Tibial artery (tissue), 4 donors: ENCODE measurements at regions of chr12 and their contacts with region 1.

Region 1: GRCh38 chr12:95918194-95918993 is 24.0 kb downstream of the CCDC38 start:
- DNase-seq: peak in 1 of 2 donors; percentile 22
- H3K4me3 ChIP-seq: no peak overlapping the region
- H3K27ac ChIP-seq: no peak overlapping the region
- H3K4me1 ChIP-seq: no peaks in the 10 kb centered on the region
- H3K27me3 ChIP-seq: no peaks in the 10 kb centered on the region
- CTCF ChIP-seq: peak; percentile 52 to 73

Region 2: DNA sequence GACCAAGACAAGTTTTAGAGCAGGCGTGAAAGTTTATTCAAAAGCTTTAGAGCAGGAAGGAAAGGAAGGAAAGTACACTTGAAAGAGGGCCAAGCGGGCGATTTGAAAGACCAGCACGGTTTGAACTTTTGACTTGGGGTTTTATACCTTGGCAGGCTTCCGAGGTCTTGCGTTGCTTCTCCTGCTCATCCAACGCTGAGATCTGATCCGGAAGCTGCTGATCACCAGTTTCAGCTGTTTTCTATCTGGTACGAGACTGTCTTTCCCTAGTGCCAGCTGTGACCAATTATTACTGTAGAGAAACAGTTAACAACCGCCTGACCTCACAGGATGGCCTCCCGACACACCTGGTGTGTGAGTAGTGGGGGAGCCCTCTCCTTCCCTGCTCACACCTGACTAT is 80.3 kb before region 1 on chr12:
- intact Hi-C with region 1: no loop called
- DNase-seq: no peak
- H3K4me3 ChIP-seq: no peak overlapping the region
- H3K27ac ChIP-seq: no peak overlapping the region
- H3K4me1 ChIP-seq: peaks cover 0 to 15% (median 0%) of the 10 kb centered on the region in 4 donors
- H3K27me3 ChIP-seq: no peaks in the 10 kb centered on the region
- CTCF ChIP-seq: no peak

Region 3: DNA sequence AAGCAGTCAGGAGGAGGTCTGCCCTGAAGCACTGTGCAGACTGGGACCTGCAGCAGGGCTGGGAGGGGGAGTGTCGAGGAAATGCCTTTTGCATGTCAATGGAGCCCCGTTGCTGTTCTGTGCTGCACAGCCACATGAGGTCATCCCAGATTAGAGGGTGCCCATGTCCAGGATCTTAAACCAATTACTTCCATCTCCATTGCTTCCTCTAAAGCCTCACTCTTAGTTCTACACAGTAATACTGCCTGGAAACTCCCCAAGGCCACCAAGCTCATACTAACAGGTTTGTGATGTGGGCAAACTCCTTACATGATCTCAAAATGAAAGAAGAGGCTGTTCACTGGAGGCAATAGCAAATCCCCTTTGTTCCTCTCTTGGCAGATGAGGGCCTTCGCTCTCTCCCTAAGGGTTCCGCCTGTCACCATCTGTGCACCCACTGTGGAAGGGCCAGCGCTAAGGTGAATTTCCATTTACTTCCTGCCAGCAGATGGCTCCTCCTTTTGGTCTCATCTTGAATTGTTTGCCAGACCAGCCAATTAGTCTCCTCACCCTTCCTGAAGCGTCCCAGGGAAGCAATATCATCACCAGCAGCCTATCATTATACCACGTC is 152.4 kb after region 1 on chr12:
- intact Hi-C with region 1: no loop called
- DNase-seq: no peak
- H3K4me3 ChIP-seq: no peak overlapping the region
- H3K27ac ChIP-seq: no peak overlapping the region
- H3K4me1 ChIP-seq: no peaks in the 10 kb centered on the region
- H3K27me3 ChIP-seq: peaks cover 0 to 2% of the 10 kb centered on the region in 2 donors
- CTCF ChIP-seq: no peak

Region 4: DNA sequence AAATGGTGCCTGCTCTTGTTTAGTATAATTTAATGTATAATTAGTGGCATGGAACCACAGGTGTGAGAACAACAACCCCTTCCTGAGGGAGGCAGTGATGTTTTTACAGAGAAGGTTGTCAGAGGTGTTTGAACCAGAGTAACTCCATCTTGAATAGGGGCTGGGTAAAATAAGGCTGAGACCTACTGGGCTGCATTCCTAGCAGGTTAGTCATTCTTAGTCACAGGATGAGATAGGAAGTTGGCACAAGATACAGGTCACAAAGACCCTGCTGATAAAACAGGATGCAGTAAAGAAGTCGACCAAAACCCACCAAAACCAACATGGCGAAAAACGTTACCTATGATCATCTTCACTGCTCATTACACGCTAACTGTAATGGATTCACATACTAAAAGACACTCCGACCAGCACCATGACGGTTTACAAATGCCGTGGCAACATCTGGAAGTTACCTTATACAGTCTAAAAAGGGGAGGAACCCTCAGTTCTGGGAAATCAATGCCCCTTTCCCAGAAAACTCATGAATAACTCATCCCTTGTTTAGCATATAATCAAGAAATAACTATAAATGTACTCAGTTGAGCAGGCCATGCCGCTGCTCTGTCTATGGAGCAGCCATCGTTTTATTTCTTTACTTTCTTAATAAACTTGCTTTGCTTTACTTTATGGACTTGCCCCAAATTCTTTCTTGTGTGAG is 164.8 kb after region 1 on chr12:
- intact Hi-C with region 1: no loop called
- DNase-seq: no peak
- H3K4me3 ChIP-seq: no peak overlapping the region
- H3K27ac ChIP-seq: no peak overlapping the region
- H3K4me1 ChIP-seq: peaks cover 0 to 10% (median 2%) of the 10 kb centered on the region in 4 donors
- H3K27me3 ChIP-seq: no peaks in the 10 kb centered on the region
- CTCF ChIP-seq: no peak

Region 5: DNA sequence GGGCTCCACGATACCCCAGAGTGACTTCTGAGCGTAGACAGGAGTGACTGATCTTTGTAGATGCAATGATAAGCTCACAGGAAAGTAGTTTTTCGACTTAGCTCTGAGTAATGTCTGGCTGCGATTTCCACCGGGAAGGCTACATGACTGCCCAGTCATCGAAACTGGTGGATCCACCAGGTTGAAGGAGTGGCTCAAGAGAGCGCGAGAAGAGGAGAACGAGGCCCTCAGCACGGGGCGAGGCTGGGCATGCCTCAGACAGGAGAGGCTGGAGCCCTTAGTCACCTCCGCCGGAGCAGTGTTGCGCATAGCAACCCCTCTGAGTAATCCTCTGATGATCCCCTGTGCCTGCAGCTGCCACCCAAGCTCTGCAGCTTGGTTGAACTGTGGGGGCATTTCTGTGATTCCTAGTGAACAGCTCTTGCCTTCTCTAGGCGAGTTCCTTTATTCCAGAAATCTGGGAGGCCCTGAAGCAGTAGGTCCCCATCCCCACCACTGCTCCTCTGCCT is 301.4 kb after region 1 on chr12:
- intact Hi-C with region 1: loop called (anchors 10 kb)
- DNase-seq: no peak
- H3K4me3 ChIP-seq: no peak overlapping the region
- H3K27ac ChIP-seq: no peak overlapping the region
- H3K4me1 ChIP-seq: peaks cover 0 to 12% (median 6%) of the 10 kb centered on the region in 4 donors
- H3K27me3 ChIP-seq: no peaks in the 10 kb centered on the region
- CTCF ChIP-seq: no peak